ENCODE measurements at regions of chr6 and their contacts with region 1.

Region 1: DNA sequence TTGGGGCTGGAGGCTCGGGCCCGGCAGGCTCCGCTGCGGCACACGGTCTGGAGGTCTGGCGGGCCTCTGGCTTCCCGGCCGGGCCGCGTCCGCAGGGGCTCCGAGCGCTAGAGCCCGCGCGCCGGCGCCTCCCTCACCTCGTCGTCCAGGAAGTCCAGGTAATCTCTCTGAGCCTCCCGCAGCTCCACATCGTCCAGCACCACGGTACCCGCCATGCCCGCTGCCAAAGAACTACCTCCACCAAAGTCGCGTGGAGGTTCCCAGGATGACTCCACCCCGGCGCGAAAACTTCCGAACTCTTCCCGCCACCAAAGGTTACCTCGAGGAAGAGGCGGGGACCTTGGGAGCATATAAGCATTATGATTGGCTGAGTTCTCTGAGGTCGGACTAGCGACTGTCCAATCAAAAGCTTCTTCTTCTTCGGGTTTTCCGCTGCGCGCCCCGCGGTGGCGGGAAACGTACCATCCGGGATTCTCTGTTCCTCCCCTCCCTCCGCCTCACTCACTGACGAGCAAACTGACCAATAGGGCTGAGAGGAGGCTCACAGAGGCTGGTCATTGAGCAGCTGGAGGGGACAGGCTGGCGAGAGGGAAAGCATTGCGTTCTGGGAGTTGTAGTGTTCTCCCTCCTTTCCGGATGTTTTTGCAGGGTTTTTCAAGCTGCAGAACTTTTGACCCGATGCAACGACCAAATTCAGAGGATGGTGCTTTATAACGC is at the start of gene MCM3:
- DNase-seq: peak; percentile 98
- H3K4me3 Mint-ChIP-seq: no peak within 1 kb of the TSS
- H3K27ac Mint-ChIP-seq: no peak within 1 kb of the TSS
- H3K4me1 Mint-ChIP-seq: peaks cover 51% of the 10 kb centered on the region
- H3K27me3 Mint-ChIP-seq: no peaks in the 10 kb centered on the region
- total RNA-seq, gene MCM3: 256 to 258 TPM

Region 2: DNA sequence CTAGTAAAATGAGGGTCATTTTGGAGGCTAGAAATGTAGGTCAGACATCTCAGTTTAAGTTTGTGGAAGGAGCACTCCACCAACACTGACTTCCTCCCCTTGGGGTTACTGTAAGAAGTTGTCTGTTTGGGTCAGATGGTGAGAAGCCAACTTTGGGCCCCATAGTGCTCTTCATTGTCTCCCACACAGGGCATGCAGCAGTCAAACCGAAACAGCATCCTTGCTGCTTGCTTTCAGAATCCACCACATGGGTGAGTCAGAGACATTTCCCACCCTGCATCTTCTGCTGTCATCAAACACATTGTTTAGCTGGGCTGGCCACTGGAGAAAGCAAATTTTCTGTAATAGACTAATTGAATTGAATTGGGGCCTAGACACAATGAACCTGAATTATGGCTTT is 57.1 kb before region 1 on chr6:
- CTCF ChIA-PET with region 1: interaction called, 3 read pairs
- intact Hi-C with region 1: loop called (anchors 1 kb)
- DNase-seq: peak; percentile 91
- H3K4me3 Mint-ChIP-seq: no peak overlapping the region
- H3K27ac Mint-ChIP-seq: no peak overlapping the region
- H3K4me1 Mint-ChIP-seq: peaks cover 18% of the 10 kb centered on the region
- H3K27me3 Mint-ChIP-seq: peaks cover 24% of the 10 kb centered on the region

Region 3: DNA sequence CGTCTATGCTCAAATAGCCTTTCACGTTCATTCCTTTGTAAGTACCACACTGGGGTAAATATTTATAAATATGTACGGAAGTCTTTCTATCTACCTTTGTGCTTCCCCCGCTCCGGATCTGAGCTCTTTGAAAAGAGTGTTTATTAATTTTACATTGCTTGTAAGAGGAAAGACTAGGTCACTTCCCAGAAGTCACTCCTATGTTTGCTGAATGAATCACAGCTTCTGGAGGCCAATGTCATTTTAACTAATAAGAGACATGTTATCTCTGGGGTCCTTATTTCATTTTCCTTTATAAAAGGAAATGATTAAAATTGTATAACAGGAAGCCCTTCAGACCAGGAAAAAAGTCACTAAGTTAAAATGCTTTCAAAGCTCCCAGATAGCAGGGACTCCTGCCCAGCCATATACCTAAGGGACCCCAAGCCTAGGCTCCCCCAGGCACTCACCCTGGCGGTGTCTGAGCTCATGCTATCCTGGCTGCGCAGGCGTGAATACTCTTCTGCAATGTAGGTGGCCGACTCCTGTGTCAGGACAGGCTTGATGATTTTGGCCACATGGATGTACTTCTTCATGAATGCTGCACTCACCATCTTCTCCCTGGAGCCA is 12.7 kb before region 1 on chr6:
- CTCF ChIA-PET with region 1: interaction called, 5 read pairs
- intact Hi-C with region 1: loop called (anchors 1 kb)
- DNase-seq: no peak
- H3K4me3 Mint-ChIP-seq: no peak overlapping the region
- H3K27ac Mint-ChIP-seq: no peak overlapping the region
- H3K4me1 Mint-ChIP-seq: peaks cover 10% of the 10 kb centered on the region
- H3K27me3 Mint-ChIP-seq: no peaks in the 10 kb centered on the region

Region 4: GRCh38 chr6:52337633-52338290 is 53.1 kb after region 1 on chr6:
- CTCF ChIA-PET with region 1: interaction called, 5 read pairs
- intact Hi-C with region 1: loop called (anchors 1 kb)
- DNase-seq: no peak
- H3K4me3 Mint-ChIP-seq: no peak overlapping the region
- H3K27ac Mint-ChIP-seq: no peak overlapping the region
- H3K4me1 Mint-ChIP-seq: peaks cover 56% of the 10 kb centered on the region
- H3K27me3 Mint-ChIP-seq: no peaks in the 10 kb centered on the region

Region 5: GRCh38 chr6:52399511-52400312 is 115.1 kb after region 1 on chr6:
- CTCF ChIA-PET with region 1: interaction called, 198 read pairs
- intact Hi-C with region 1: loop called (anchors 1 kb)
- DNase-seq: peak; percentile 64
- H3K4me3 Mint-ChIP-seq: no peak overlapping the region
- H3K27ac Mint-ChIP-seq: peak overlapping the region; percentile 73
- H3K4me1 Mint-ChIP-seq: peaks cover 72% of the 10 kb centered on the region
- H3K27me3 Mint-ChIP-seq: no peaks in the 10 kb centered on the region

Region 6: GRCh38 chr6:52635049-52635577 is 350.5 kb after region 1 on chr6:
- CTCF ChIA-PET with region 1: interaction called, 5 read pairs
- intact Hi-C with region 1: loop called (anchors 1 kb)
- DNase-seq: peak; percentile 75
- H3K4me3 Mint-ChIP-seq: peak overlapping the region; percentile 25
- H3K27ac Mint-ChIP-seq: peak overlapping the region; percentile 67
- H3K4me1 Mint-ChIP-seq: peaks cover 18% of the 10 kb centered on the region
- H3K27me3 Mint-ChIP-seq: peaks cover 5% of the 10 kb centered on the region

Region 7: GRCh38 chr6:53064726-53065215 is 780.2 kb after region 1 on chr6:
- CTCF ChIA-PET with region 1: no interaction called
- intact Hi-C with region 1: loop called (anchors 1 kb)
- DNase-seq: peak; percentile 99
- H3K4me3 Mint-ChIP-seq: peak overlapping the region; percentile 97
- H3K27ac Mint-ChIP-seq: peak overlapping the region; percentile 99
- H3K4me1 Mint-ChIP-seq: peaks cover 55% of the 10 kb centered on the region
- H3K27me3 Mint-ChIP-seq: no peaks in the 10 kb centered on the region